Mammary epithelial cell (primary cell): ENCODE measurements at regions of chr15 and their contacts with region 1.

Region 1: DNA sequence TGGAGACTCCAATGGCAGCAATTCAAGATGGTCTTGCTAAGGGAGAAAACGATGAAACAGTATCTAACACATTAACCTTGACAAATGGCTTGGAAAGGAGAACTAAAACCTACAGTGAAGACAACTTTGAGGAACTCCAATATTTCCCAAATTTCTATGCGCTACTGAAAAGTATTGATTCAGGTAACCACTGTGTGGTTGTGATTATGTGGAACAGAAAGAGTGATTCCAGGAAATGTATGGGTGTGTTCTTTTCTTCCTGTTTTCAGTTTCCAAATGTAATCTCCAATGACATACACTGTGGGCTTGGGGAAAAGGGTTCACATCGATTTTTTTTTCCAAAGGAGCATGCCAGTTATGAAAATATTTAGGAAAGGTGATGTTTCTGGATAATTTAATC is 10.9 kb downstream of the SCG3 start:
- DNase-seq: no peak
- H3K4me3 ChIP-seq: no peak overlapping the region
- H3K27ac ChIP-seq: no peak overlapping the region
- H3K4me1 ChIP-seq: no peaks in the 10 kb centered on the region
- H3K27me3 ChIP-seq: peaks cover 6% of the 10 kb centered on the region
- CTCF ChIP-seq: no peak

Region 2: DNA sequence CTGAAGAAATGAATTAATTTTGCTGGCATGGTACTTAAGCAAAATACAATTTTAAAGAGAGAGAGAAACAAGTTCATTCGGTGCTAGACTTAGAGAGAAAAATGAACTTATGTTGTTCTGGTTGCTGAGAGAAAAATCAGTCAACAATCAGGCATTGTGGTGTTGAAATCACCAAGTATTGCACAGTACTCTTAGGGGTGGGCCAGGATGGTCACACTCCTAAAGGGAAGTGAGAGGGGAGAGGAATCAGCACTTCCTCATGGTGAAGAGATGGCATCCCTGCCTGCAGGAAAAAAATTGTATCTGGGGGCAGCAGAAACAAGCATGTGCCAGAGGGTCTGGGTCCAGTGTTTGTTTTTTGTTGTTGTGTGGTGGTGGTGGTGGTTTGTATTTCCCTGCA is 62.5 kb before region 1 on chr15:
- CTCF ChIA-PET with region 1: no interaction called
- dilution Hi-C with region 1: loop called (anchors 5 kb)
- in situ Hi-C with region 1: no loop called
- intact Hi-C with region 1: no loop called
- DNase-seq: no peak
- H3K4me3 ChIP-seq: no peak overlapping the region
- H3K27ac ChIP-seq: no peak overlapping the region
- H3K4me1 ChIP-seq: no peaks in the 10 kb centered on the region
- H3K27me3 ChIP-seq: no peaks in the 10 kb centered on the region
- CTCF ChIP-seq: no peak